ENCODE measurements at regions of chr7 and their contacts with region 1.

Region 1: GRCh38 chr7:116258734-116259133 is 48.4 kb downstream of the TES start:
- DNase-seq: peak; percentile 82
- H3K4me3 ChIP-seq: 0 out of 2 replicates have a peak overlapping the region, but pooled peaks have one; percentile 10
- H3K27ac ChIP-seq: peak overlapping the region; percentile 84
- H3K4me1 ChIP-seq: peaks cover 18% of the 10 kb centered on the region
- H3K27me3 ChIP-seq: no peaks in the 10 kb centered on the region

Region 2: GRCh38 chr7:116438267-116438666 is 179.5 kb after region 1 on chr7:
- in situ Hi-C with region 1: loop called (anchors 10 kb)
- DNase-seq: peak; percentile 53
- H3K4me3 ChIP-seq: no peak overlapping the region
- H3K27ac ChIP-seq: peak overlapping the region; percentile 6; the same call in 1 of the 2 replicates
- H3K4me1 ChIP-seq: peaks cover 51% of the 10 kb centered on the region
- H3K27me3 ChIP-seq: no peaks in the 10 kb centered on the region

Region 3: DNA sequence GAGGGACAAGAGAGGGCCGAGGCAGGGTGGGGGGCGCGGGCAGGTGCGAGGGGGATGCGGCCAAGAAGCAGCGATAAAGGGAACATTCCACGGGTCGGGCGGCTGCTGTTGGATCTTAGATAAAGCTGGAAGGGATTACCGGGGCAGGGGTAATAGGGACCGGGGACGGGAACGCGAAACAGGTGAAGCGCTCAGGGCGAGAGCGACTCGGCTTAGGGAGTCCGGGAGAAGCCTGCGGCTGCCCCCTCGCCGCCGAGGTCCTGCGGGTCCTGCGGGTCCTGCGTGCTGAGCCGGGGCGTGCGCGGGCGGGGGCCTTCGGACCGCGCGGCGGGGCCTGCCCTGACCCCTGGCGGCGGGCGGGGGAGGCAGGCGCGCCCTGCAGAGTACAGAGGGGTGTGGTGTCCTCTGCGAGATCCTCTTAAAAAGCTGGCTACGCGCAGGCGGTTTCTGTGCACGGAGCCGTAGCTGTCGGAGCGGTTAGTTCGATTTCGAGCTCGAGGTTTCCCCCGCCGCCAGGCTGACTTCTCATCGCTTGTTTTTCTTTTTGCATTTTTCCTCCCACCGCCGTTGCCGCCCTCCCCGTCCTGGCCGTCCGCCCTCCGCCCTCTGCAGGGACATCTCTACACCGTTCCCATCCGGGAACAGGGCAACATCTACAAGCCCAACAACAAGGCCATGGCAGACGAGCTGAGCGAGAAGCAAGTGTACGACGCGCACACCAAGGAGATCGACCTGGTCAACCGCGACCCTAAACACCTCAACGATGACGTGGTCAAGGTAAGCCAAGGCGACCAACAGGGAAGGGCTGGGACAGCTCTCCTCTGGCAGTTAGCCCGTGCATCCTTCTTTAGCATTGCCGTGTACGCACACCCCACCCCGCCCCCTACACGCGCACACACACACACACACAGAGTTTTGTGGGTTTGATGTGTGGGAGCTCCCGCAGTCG is 267.5 kb after region 1 on chr7:
- in situ Hi-C with region 1: loop called (anchors 10 kb)
- DNase-seq: peak; percentile 96
- H3K4me3 ChIP-seq: peak overlapping the region; percentile 95
- H3K27ac ChIP-seq: peak overlapping the region; percentile 95
- H3K4me1 ChIP-seq: peaks cover 48% of the 10 kb centered on the region
- H3K27me3 ChIP-seq: no peaks in the 10 kb centered on the region

Region 4: DNA sequence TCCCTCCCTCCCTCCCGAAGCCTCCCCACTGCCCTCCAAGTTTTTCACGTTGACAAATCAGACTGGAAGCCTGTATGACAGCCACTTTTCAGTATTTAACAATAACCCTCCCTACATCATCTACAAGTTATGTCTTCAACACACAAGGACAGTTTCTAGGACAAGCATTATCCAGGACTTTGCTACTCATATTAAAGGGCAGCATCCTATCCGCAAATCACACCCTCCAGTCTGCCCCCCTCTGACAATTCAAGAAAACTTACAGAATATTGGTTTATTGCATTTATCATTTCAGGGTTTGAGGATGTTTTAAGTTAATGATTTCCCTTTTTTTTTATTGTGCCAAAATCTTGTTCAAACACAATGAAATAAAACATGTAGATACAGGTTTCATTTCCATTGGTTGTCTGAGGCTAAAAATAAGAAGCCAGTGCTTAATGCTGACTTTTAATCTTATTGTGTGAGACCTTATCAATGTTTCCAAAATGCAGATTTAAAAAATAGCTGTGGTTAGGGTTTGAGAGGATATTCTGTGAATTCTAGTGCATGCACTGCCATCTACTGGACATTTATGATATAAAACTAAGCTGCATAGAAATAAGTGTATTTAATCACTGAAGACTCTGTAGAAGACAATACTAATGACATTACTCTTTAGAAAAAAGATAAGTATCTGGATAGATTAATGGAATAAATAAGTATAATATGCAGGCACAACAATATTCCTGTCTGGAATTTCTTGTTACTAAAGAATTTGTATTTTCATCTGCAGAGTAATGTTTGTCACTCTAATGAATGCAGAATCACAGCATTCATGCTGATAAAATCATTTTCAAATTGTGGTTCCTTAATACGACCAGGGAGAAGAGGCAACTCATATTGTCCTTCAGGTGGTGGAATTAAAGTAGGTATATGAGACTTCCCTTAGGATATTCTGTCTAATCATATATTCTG is 330.2 kb after region 1 on chr7:
- in situ Hi-C with region 1: loop called (anchors 5 kb)
- DNase-seq: peak; percentile 70
- H3K4me3 ChIP-seq: no peak overlapping the region
- H3K27ac ChIP-seq: peak overlapping the region; percentile 76
- H3K4me1 ChIP-seq: peaks cover 25% of the 10 kb centered on the region
- H3K27me3 ChIP-seq: no peaks in the 10 kb centered on the region

Measured in GM23248 (cell line).